HEK293T (cell line): ENCODE measurements at regions of chr6 and their contacts with region 1.

Region 1: GRCh38 chr6:26122793-26123674 is 35.8 kb downstream of the HFE start:
- DNase-seq: peak; percentile 71

Region 2: GRCh38 chr6:25835442-25836283 is 287.4 kb before region 1 on chr6:
- CTCF ChIA-PET with region 1: no interaction called
- POLR2A ChIA-PET with region 1: no interaction called
- DNase-seq: no peak

Region 3: DNA sequence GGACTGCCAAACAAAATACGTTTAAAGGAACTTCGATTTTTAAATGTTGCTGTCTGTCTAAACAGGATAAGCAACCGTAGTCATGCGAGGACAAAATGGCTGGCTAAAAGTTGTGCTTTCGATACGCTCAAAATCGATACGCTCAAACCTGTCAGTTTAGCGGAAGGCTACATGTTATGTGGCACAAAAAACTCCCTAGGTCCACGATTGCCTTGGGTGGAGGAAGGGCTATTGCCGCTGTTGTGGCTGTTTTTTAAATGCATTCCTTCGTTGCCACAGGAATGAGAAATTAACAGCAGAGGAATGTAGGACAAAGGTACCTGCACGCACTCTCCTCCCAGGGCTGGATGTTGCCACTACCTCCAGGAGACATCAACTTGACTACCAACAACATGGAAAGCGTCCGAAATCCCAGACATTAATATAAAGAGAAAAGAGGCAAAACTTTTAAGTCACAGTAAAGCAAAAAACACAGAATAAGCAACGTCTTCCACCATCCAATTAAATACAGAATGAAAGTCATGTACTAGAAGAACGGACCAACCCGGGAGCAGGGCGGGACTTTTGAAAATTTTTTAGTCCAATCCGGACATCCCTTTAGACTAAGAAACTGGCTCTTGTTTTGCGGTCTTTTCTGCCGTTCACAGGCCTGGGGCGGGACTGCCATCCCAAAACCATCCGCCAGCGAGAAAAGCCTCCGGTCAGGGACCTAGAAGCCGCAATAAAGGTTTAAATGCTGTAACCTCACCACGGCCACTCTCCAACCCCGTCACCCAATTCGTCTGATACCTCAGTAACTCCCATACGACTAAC is 68.0 kb before region 1 on chr6:
- CTCF ChIA-PET with region 1: no interaction called
- POLR2A ChIA-PET with region 1: interaction called, 88 read pairs
- DNase-seq: peak; percentile 62

Region 4: DNA sequence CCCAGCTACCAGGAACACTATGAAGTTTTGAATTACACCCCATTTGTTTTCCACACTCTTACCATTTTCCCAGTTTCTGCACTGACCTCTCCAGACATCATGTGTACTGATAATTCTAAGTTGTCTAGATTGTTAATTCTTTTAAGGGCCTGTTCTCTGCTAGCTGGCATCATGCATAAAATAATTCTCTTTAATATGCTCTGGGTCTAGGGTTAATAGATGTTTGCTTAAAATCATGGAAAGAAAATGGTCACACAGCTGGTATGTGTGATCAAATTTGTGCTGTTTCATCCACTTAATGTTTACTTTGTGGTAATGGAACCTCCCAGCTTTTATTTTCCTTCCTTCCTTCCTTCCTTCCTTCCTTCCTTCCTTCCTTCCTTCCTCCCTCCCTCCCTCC is 13.3 kb after region 1 on chr6:
- CTCF ChIA-PET with region 1: no interaction called
- POLR2A ChIA-PET with region 1: interaction called, 32 read pairs
- DNase-seq: no peak

Region 5: GRCh38 chr6:26172496-26172958 is 49.5 kb after region 1 on chr6:
- CTCF ChIA-PET with region 1: interaction called, 3 read pairs
- POLR2A ChIA-PET with region 1: interaction called, 21 read pairs
- DNase-seq: no peak

Region 6: DNA sequence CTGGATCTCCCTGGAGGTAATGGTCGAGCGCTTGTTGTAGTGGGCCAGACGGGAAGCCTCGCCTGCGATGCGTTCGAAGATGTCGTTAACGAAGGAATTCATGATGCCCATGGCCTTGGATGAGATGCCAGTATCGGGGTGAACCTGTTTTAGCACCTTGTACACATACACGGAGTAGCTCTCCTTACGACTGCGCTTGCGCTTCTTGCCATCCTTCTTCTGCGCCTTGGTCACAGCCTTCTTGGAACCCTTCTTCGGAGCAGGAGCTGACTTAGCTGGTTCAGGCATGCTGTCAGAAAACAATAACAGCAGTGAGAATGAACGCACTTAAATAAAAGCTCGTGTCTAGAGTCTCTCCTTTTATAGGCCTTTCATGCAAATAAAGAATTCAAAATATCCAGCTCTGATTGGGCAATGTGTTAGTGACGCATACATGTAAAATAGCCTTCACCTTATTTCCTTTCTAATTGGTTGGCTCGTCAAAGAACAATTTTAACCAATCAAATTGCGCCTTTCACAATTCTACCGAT is 93.4 kb after region 1 on chr6:
- CTCF ChIA-PET with region 1: no interaction called
- POLR2A ChIA-PET with region 1: interaction called, 11 read pairs
- DNase-seq: no peak

Region 7: DNA sequence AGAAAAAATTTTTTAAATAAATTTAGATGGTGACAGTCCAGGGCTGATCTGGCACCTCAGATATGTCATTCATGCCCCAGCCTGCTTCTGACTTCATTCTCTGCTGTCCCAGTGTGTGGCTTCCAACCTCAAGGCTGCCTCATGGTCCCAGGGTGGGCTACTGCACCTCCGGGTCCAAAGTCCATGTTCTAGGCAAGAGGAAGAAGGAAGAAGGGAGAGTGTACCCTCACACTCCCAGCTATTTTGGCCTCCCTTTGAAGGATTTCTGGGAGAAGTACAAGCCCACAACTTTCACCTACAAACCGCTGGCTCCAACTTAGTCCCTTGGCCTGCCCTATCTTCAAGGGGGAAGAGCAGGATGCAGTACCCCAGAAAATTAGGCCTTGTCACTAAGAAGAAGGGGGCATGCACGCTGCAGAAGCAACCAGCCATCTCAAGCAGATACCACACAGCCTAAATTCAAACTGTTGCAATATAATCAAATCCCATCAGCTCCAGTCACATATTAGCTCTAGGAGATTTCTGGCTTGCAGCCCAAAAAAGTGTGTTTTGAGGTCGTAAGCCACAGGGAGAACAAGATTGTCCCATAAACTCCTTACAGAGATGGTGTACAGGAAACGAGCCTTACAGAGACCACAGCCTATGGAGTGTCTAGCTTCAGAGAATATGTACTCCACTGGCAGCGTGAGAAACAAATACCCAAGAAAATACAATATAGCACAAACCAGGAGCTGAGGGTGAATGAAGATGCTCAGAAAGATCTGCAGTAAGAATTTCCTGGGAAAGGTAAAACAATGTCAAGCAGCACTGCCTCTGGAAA is 241.1 kb after region 1 on chr6:
- CTCF ChIA-PET with region 1: no interaction called
- POLR2A ChIA-PET with region 1: no interaction called
- DNase-seq: no peak

Region 8: GRCh38 chr6:27146706-27147505 is 1023.9 kb after region 1 on chr6:
- CTCF ChIA-PET with region 1: no interaction called
- POLR2A ChIA-PET with region 1: interaction called, 16 read pairs
- DNase-seq: peak; percentile 84